ENCODE measurements at regions of chr2 and their contacts with region 1.

Region 1: DNA sequence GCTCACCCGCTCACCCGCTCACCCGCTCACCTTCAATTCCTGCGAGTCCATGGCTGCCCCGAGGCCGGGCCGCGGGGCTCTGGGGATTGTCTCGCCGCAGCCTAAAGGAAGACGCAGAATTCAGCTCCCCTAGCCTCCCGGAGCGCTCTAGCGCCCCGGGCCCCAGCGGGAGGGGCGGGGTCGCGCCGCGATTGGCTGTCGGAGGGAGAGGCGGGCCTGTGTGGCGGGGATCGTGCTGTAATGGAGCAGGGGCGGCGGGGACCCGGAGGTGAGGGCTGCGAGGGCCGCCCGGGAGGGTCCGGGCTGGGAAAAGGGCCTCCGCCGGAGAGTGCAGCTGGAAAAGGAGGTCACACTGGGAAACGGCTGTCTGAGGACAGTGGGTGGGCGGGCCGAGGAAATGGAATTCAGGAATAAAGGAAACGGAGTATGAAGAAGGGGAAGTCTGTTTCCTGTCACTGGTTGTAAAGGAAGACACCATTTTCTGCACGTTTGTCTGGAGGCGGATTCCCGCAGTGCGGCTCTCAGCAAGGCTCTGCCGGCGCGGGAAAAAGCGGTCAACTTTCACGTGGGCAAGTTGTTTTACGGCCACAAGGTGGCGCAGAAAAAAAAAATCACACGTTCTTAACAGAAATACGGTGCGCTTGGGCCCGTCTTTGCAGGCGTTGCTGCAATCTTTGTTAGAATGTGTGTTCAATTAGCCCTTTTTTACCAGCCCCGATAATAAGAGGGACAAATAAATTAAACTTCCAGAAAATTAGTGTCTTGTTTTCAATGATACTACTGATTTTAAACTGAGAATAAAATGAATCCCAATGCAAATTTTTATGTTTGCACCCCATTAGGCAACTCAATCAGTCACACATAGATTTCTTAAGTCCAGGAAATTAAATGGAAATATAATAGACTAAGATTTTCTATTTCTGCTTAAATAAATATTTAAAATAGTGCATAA is at the start of gene TTC21B:
- DNase-seq: peak; percentile 75 to 91
- H3K4me3 ChIP-seq: peak within 1 kb of the TSS; percentile 90
- H3K27ac ChIP-seq: no peak within 1 kb of the TSS
- H3K4me1 ChIP-seq: peaks cover 7% of the 10 kb centered on the region
- H3K27me3 ChIP-seq: no peaks in the 10 kb centered on the region
- CTCF ChIP-seq: peak; percentile 80
- total RNA-seq, gene TTC21B: 6.3 and 9.8 TPM in 2 replicates

Region 2: GRCh38 chr2:165794536-165794928 is 159.4 kb before region 1 on chr2:
- CTCF ChIA-PET with region 1: no interaction called
- POLR2A ChIA-PET with region 1: no interaction called
- intact Hi-C with region 1: no loop called
- DNase-seq: peak; percentile 41 to 52
- H3K4me3 ChIP-seq: peak overlapping the region; percentile 90
- H3K27ac ChIP-seq: peak overlapping the region; percentile 98
- H3K4me1 ChIP-seq: peaks cover 33% of the 10 kb centered on the region
- H3K27me3 ChIP-seq: no peaks in the 10 kb centered on the region
- CTCF ChIP-seq: no peak

Region 3: DNA sequence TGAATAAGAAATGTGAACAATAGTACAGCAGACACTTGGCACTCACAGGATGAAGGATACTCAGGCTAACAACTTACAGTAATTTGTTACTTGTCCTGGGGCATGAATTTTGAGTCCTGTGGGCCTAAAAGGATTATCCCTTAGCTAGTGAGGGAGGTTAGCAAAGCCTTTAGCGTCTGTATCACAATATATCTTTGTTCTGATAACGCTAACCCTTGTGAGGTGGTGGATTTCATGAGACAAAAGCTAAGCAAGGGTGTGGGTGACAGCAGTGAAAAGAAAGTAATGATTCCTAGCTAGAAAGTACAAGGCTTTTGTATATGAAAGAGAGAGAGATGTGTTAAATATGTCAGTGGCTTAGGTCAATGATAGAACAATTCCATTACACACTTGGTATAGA is 46.5 kb after region 1 on chr2:
- CTCF ChIA-PET with region 1: no interaction called
- POLR2A ChIA-PET with region 1: no interaction called
- intact Hi-C with region 1: no loop called
- DNase-seq: no peak
- H3K4me3 ChIP-seq: no peak overlapping the region
- H3K27ac ChIP-seq: no peak overlapping the region
- H3K4me1 ChIP-seq: no peaks in the 10 kb centered on the region
- H3K27me3 ChIP-seq: no peaks in the 10 kb centered on the region
- CTCF ChIP-seq: no peak

Region 4: DNA sequence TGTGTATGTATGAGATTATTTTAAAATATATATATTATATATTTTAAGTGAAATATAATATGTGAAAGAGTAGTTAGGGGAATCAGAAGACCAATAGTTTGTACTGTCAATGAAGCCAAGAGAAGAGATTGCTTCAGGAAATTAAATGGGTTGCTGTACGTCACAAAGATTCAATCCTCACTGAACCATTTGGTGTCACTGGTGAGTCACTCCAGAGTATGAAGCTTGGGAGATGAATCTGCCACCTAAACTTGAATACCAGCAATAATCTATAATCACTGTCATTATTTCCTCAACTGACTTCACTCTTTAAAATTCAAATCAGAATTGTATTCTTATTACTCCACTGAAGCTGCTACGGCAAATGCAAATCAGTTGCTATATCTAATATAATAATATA is 463.7 kb after region 1 on chr2:
- CTCF ChIA-PET with region 1: no interaction called
- POLR2A ChIA-PET with region 1: no interaction called
- intact Hi-C with region 1: loop called (anchors 2 kb)
- DNase-seq: no peak
- H3K4me3 ChIP-seq: no peak overlapping the region
- H3K27ac ChIP-seq: no peak overlapping the region
- H3K4me1 ChIP-seq: no peaks in the 10 kb centered on the region
- H3K27me3 ChIP-seq: no peaks in the 10 kb centered on the region
- CTCF ChIP-seq: no peak